Naive thymus-derived CD4-positive, alpha-beta T cell (primary cell): ENCODE measurements at regions of chr1 and their contacts with region 1.

Region 1: GRCh38 chr1:67105508-67105907 is 29.3 kb downstream of the C1orf141 start:
- DNase-seq: no peak
- ATAC-seq: no peak
- H3K4me3 ChIP-seq: no peak overlapping the region
- H3K4me3 Mint-ChIP-seq: no peak overlapping the region
- H3K27ac ChIP-seq: no peak overlapping the region
- H3K27ac Mint-ChIP-seq: no peak overlapping the region
- H3K4me1 ChIP-seq: no peaks in the 10 kb centered on the region
- H3K4me1 Mint-ChIP-seq: peaks cover 0 to 18% (median 7%) of the 10 kb centered on the region in 7 donors
- H3K27me3 ChIP-seq: no peaks in the 10 kb centered on the region
- H3K27me3 Mint-ChIP-seq: peaks cover 0 to 7% (median 0%) of the 10 kb centered on the region in 5 donors

Region 2: DNA sequence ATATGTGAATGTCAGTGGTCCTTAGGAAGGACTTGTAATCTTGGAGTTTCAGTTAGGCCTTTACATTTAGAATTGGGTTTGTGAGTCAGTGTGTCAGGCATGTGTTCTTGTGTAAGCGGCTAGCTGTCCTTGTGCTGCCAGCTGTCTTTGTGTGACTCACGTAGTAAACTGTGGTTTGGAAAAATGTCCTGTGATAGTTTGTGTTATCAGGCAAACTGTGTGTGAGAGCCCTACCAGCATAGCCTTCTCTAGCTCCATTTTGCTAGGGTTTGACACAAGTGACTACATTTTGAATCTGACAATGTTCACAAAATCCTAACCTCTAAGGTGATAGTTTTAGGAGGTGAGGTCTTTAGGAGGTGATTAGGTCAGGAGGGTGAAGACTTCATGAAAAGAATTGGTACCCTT is 44.7 kb before region 1 on chr1:
- CTCF ChIA-PET with region 1: no interaction called
- POLR2A ChIA-PET with region 1: no interaction called
- intact Hi-C with region 1: loop called in 1 of 2 experiments (anchors 5 kb)
- DNase-seq: no peak
- ATAC-seq: no peak
- H3K4me3 ChIP-seq: no peak overlapping the region
- H3K4me3 Mint-ChIP-seq: no peak overlapping the region
- H3K27ac ChIP-seq: no peak overlapping the region
- H3K27ac Mint-ChIP-seq: no peak overlapping the region
- H3K4me1 ChIP-seq: no peaks in the 10 kb centered on the region
- H3K4me1 Mint-ChIP-seq: peaks cover 0 to 2% (median 0%) of the 10 kb centered on the region in 7 donors
- H3K27me3 ChIP-seq: no peaks in the 10 kb centered on the region
- H3K27me3 Mint-ChIP-seq: peaks cover 0 to 25% (median 0%) of the 10 kb centered on the region in 5 donors

Region 3: DNA sequence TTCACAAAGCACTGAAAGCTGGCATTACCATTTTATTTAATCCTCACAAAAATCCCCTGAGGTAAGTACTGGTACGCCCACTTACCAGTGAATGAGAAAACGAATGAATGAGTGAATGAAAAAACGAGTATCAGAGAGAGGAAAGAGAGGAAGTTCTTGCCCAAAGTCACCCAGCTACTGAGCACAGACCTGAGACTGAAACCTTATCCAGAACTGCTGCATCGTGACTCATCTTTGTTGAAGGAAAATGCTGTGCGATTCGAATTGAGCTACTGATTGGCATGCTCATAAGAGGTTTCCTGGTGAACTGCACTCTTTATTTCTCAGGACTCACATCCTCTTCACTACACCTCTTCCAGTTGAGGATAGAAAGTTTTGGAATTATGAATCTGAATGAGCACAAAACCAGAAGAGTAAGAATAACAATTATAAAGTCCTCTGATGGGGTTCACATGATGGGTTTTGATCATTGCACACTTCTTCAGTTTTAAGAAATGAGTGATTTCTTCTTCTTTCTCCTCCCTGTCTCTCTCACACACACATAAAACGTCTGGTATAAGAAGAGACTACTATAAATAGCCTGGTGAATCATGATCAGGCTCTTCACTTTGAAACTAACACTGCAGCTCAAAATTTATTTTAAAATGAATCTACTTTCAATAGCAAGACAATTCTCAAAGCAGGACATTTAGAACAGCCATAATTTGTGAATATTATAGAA is 234.3 kb after region 1 on chr1:
- CTCF ChIA-PET with region 1: no interaction called
- POLR2A ChIA-PET with region 1: no interaction called
- intact Hi-C with region 1: no loop called
- DNase-seq: peak in 1 of 9 donors; percentile 41
- ATAC-seq: no peak
- H3K4me3 ChIP-seq: no peak overlapping the region
- H3K4me3 Mint-ChIP-seq: peak overlapping the region in 3 of 10 donors; percentile 1 to 61 (median 35)
- H3K27ac ChIP-seq: no peak overlapping the region
- H3K27ac Mint-ChIP-seq: peak overlapping the region in 1 of 9 donors; percentile 81
- H3K4me1 ChIP-seq: peaks cover 11 to 24% of the 10 kb centered on the region in 2 donors
- H3K4me1 Mint-ChIP-seq: peaks cover 30 to 81% (median 62%) of the 10 kb centered on the region in 7 donors
- H3K27me3 ChIP-seq: no peaks in the 10 kb centered on the region
- H3K27me3 Mint-ChIP-seq: no peaks in the 10 kb centered on the region